GM23248 (cell line): ENCODE measurements at regions of chrX and their contacts with region 1.

Region 1: DNA sequence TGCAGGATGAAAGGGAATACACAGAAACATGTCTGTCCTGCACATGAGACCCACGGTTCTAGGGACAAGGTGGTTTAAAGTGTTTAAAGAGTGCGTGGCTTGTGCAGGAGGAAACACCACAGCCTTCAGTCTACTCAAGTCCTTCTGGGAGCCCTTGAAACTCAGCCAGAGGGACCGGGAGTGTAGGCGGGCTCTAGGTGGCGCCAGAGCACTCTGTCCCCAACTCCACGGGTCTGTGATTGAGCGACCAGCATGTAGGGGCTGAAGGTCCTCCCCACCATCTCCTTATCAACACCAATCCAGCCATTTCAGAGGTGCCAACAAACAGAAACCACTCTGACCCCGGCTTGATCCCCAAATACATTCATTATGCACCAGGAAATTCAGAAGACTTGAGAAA is 82.0 kb upstream of the CLDN34 start:
- DNase-seq: peak; percentile 72
- H3K4me3 ChIP-seq: no peak overlapping the region
- H3K27ac ChIP-seq: no peak overlapping the region
- H3K4me1 ChIP-seq: no peaks in the 10 kb centered on the region
- H3K27me3 ChIP-seq: no peaks in the 10 kb centered on the region

Region 2: DNA sequence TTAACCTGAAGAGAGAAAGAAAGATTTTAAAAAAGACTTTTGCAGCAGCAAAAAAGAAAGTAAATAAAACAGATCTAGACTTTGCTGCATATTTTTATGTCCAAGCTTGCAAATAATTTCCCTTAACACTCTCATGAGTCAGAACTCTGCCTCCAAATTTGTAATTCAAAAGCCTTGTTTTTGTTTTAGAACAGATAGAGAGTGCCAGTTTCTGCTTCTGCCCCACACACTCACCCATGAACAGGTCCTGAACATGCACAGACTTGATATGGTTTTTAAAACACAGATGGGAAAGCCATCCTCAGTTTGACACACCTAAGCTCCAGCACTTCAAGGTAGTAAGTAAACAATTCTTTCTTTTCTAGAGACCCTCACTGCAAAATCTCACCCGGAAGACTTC is 1460.2 kb before region 1 on chrX:
- in situ Hi-C with region 1: no loop called
- DNase-seq: no peak
- H3K4me3 ChIP-seq: no peak overlapping the region
- H3K27ac ChIP-seq: no peak overlapping the region
- H3K4me1 ChIP-seq: no peaks in the 10 kb centered on the region
- H3K27me3 ChIP-seq: no peaks in the 10 kb centered on the region

Region 3: GRCh38 chrX:9988762-9989161 is 103.6 kb after region 1 on chrX:
- in situ Hi-C with region 1: loop called (anchors 10 kb)
- DNase-seq: peak; percentile 28
- H3K4me3 ChIP-seq: no peak overlapping the region
- H3K27ac ChIP-seq: no peak overlapping the region
- H3K4me1 ChIP-seq: no peaks in the 10 kb centered on the region
- H3K27me3 ChIP-seq: no peaks in the 10 kb centered on the region

Region 4: GRCh38 chrX:10119399-10119990 is 234.3 kb after region 1 on chrX:
- in situ Hi-C with region 1: loop called (anchors 25 kb)
- DNase-seq: peak; percentile 70
- H3K4me3 ChIP-seq: no peak overlapping the region
- H3K27ac ChIP-seq: no peak overlapping the region
- H3K4me1 ChIP-seq: no peaks in the 10 kb centered on the region
- H3K27me3 ChIP-seq: no peaks in the 10 kb centered on the region